ENCODE measurements at regions of chr22 and their contacts with region 1.

Region 1: DNA sequence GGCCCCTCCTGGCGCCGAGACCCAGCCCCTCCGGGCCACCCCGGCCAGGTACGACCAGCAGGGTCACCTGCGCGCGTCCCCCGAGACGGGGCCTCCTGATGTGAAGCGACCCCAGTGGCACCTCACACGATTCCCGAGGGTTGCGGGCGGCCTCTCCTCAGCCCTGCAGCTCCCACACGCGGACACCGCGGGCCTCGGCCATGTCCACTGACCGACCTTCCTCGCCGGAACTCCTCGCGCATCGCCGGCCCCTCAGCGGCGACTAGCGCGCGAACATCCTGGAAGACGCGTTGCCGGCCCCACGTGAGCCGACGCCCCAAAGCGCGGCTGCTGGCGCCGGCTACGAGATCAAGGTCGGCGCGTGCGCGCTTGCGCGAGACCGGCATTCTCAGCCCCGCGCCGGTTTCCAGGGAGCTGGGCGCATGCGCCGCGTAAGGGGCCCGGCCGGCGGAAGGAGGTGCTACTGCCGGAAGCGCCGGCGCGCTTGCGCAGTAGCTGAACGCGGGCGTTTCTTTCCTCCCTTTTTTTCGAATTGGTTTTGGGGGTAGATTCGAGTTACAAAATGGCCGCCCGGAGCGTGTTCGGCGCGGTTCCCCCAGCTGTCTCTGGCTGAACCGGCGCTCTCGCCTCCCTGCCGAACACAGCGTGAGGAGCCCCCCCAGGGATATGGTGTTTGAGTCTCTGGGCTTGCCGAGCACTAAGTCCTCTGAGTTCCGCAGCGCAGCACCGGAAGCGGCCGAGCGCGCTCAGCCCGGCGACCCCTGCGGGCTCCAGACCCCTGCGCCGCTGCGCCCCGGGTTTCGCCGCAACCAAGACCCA is at the start of gene NUP50:
- DNase-seq: peak; percentile 98
- ATAC-seq: peak; percentile 97
- total RNA-seq, gene NUP50: 15.2 TPM

Region 2: DNA sequence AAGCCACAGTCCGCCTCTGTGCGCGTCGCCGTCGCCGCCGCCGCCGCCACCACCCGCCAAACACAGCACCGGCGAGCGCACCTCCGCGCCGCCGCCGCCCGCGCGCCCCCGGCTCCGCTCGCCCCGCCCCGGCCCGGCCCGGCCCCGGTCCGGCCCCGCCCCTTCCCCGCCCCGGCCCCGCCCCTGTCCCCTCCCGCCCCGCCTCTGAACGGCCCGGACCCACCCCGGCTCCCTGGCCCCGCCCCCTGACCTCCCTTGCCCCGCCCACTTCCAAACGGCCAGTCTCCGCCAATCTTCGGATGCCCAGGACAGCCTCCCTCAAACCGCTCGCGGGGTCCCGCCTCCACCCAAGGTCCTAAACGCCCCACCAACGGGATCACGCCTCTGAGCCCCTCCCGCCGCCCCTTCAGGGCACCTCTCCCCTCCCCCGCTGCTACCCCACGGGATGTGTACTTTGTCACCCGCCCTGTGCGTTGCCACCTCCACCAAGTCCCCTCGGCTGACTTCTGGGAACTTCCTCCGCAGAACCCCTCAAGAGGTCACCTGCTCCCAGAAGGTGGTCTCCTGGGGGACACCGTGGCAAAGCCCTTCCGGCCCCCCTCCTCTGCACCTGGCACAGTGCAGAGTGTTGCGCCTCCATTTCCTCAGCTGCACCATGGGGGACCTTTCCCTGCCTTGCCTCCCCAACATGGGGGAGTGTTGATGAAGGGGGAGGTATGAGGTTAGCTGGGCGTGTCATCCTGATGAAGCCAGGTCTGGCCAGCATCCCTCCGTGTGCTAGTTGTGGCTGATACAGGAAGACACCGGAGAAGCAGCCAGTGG is 77.4 kb after region 1 on chr22 and contains the start of gene KIAA0930:
- intact Hi-C with region 1: loop called (anchors 5 kb)
- DNase-seq: peak; percentile 91
- ATAC-seq: peak; percentile 80
- total RNA-seq, gene KIAA0930: 22.3 TPM

Region 3: DNA sequence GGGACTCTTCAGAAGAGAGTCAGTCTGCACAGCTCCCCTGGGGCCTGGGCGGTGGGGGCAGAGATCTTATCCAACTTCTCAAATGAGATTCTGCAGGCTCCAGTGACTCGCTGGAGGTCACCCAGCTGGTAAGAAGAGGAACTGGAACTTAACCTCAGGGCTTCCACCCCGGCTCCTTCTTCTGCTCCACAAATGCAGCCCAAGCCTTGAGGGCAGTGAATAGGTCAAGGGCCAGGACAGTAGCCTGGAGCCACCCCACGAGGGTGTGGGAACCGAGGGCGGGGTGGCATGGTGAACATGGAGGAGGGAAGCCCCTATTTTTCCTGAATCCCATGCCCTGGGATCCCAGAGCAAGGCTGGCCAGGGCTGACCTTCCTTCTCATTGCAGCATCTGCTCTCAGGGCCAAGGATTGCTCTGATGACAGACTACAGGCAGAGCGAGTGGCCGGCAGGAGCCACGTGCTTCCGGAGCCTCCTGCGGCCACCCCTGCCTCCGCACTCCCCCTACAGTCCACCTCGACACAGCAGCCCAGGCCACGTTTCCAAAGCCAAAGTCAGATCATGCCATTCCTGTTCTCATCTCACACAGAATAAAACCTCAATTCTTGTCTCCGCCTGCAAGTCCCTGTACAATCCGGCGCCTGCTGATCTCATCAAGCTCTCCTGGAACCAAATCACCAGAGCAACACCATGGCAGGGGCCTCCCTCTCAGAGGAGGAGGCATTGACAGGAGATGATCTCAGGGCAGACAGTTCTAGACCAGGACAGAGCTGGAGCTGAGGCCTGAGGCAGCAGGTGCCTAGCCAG is 100.0 kb after region 1 on chr22:
- intact Hi-C with region 1: loop called (anchors 5 kb)
- DNase-seq: peak; percentile 86
- ATAC-seq: peak; percentile 94

Region 4: DNA sequence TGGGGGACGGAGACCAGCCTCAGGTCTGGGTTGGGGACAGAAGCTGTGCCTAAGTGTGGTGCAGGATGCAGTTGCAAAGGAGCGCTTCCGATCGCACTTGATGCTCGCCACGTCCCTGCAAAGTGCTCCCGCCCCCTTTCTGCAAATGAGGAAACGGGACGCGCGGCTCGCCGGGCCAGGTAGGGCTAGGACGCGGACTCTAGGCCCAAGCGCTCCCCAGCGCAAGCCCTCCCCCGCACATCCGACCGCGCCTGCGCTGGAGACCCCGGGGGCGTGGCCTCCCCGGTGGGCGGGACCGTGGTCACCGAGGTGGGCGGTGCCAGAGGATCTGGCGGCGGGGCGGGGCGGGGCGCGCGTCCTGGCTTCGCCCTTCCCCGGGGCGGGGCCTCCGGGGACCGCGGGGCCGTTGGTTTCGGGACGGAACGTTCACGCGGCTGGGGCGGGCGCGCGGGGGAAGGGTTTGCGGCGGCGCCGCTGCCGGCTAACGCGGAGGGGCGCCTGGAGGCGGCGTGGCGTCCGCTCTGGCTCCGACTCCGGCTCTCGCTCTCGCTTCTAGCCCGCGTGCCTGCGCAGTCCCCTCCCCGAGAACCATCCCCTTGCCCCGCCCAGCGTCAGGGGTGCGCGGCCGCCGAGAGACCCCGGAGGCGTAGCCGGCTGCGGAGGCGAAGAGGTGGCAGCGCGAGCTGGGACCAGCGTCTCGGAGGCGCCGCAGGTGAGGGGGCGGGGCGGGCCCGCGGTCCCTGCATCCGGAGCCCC is 146.0 kb after region 1 on chr22 and contains the start of gene FAM118A:
- intact Hi-C with region 1: loop called (anchors 10 kb)
- DNase-seq: peak; percentile 96
- ATAC-seq: peak; percentile 95
- total RNA-seq, gene FAM118A: 18.7 TPM